K562 (cell line): ENCODE measurements at regions of chr15 and their contacts with region 1.

Region 1: GRCh38 chr15:55196458-55197361 is at the start of gene RSL24D1:
- DNase-seq: peak; percentile 84 to 99 (median 88)
- ATAC-seq: peak; percentile 96
- H3K4me3 ChIP-seq: peak within 1 kb of the TSS; percentile 90
- H3K27ac ChIP-seq: peak within 1 kb of the TSS; percentile 94
- H3K4me1 ChIP-seq: peaks cover 3 to 20% of the 10 kb centered on the region in 2 experiments; a peak in 3 of 5 replicates
- H3K27me3 ChIP-seq: no peaks in the 10 kb centered on the region
- CTCF ChIP-seq: peak; percentile 59 to 68 (median 62)
- EP300 ChIP-seq: peak; percentile 48; the same call in 1 of the 2 replicates
- POLR2A ChIP-seq: peak; percentile 94
- RAD21 ChIP-seq: peak; percentile 17 to 41; a peak in 3 of 4 replicates
- polyA plus RNA-seq, gene RSL24D1: 272 to 324 TPM

Region 2: GRCh38 chr15:55151631-55152030 is 45.1 kb before region 1 on chr15:
- CTCF ChIA-PET with region 1: no interaction called
- POLR2A ChIA-PET with region 1: no interaction called
- in situ Hi-C with region 1: no loop called
- intact Hi-C with region 1: no loop called
- DNase-seq: no peak
- ATAC-seq: peak; percentile 22; the same call in 2 of the 3 replicates
- H3K4me3 ChIP-seq: no peak overlapping the region
- H3K27ac ChIP-seq: no peak overlapping the region
- H3K4me1 ChIP-seq: no peaks in the 10 kb centered on the region
- H3K27me3 ChIP-seq: no peaks in the 10 kb centered on the region
- CTCF ChIP-seq: no peak
- EP300 ChIP-seq: no peak
- POLR2A ChIP-seq: no peak
- RAD21 ChIP-seq: no peak

Region 3: DNA sequence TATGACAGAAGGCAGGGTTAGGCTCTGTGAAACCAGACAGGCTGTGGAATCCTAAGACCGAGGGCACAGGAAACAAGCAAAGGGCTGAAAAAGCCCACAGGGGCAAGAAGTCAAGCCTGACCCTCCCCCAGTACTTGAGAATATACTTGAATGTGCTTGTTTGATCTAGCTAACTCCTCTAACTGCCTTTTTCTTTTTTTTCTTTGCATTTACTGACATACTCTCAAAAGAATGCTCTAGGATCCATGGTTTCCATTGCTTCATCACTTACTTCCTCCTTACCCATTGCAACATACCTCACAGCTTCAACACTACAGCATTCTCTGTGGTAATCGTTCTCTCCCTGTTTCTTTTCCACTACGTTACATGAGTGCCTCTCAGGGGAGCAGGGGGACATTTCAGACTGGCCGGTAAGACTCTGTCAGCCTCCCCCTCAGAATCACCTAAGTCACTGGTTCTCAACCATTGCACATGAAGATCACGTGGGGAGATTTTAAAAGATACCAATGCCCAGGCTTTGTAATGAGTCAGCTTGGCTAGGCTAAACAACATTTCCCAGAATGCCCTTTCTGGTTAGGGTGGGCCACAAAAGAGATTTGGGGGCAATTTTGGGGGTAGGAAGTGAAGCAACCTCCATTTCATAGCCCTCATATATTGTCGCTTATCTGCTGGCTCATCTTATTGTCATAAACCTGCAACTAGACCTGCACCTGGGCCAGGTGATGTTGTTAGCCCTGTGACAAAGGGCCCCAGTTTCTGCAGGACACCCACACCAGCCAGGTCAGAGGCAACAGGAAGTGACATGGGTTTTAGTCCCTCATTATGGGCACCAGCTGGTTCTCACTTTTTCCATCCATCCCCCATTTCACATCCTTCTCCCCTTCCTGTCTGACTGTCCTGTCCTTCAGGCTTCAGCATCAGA is 24.6 kb after region 1 on chr15:
- CTCF ChIA-PET with region 1: interaction called, 4 read pairs
- POLR2A ChIA-PET with region 1: interaction called, 13 read pairs
- in situ Hi-C with region 1: no loop called
- intact Hi-C with region 1: no loop called
- DNase-seq: no peak
- ATAC-seq: peak; percentile 19
- H3K4me3 ChIP-seq: no peak overlapping the region
- H3K27ac ChIP-seq: peak overlapping the region; percentile 35; the same call in 1 of the 3 replicates
- H3K4me1 ChIP-seq: peaks cover 0 to 28% of the 10 kb centered on the region in 2 experiments; a peak in 4 of 5 replicates
- H3K27me3 ChIP-seq: no peaks in the 10 kb centered on the region
- CTCF ChIP-seq: no peak
- EP300 ChIP-seq: no peak
- POLR2A ChIP-seq: no peak
- RAD21 ChIP-seq: 0 out of 4 replicates have a peak, but pooled peaks of 1 of the 2 experiments have one; percentile 12